Sigmoid colon (tissue), 7 donors: ENCODE measurements at regions of chr4 and their contacts with region 1.

Region 1: GRCh38 chr4:174522183-174523048 is at the start of gene HPGD:
- DNase-seq: peak; percentile 82
- H3K4me3 ChIP-seq: peak within 1 kb of the TSS; percentile 59 to 86 (median 76)
- H3K27ac ChIP-seq: peak within 1 kb of the TSS; percentile 63 to 87 (median 82)
- H3K4me1 ChIP-seq: peaks cover 0 to 44% (median 28%) of the 10 kb centered on the region in 4 donors
- H3K27me3 ChIP-seq: no peaks in the 10 kb centered on the region
- CTCF ChIP-seq: no peak
- EP300 ChIP-seq: no peak
- POLR2A ChIP-seq: peak in 1 of 2 donors; percentile 19
- total RNA-seq, gene HPGD: 134 to 232 (median 165) TPM

Region 2: DNA sequence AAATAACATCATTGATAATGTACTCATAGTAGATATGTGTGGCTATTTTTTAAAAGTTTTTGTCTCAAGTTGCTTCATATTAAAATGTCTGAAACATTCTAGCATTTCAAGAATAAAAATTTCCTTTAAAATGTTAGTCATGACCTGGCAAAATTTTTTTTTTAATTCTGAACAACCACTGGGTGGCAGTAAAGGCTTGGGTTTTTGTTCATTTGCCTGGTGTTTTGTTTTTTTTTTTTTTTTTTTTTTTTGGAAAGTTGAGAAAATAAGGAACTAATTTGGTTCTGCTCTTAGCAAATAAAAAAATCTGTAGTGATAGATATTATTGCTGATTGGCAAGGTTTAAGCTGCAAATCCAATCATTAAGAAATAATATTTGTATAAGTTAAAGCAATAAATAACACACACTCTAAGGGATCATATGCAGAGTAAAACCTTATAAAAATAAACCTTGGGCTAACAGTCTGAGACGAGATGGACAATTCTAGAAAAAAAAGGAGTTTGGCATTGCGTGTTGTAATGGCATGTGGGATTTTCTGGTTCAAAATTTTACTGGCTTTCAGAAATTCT is 157.3 kb before region 1 on chr4:
- intact Hi-C with region 1: loop called (anchors 2 kb)
- DNase-seq: no peak
- H3K4me3 ChIP-seq: no peak overlapping the region
- H3K27ac ChIP-seq: no peak overlapping the region
- H3K4me1 ChIP-seq: peaks cover 0 to 10% (median 2%) of the 10 kb centered on the region in 4 donors
- H3K27me3 ChIP-seq: no peaks in the 10 kb centered on the region
- CTCF ChIP-seq: peak in 3 of 4 experiments; percentile 24 to 43 (median 40)
- EP300 ChIP-seq: no peak
- POLR2A ChIP-seq: no peak

Region 3: GRCh38 chr4:174437324-174437723 is 85.1 kb before region 1 on chr4:
- intact Hi-C with region 1: no loop called
- DNase-seq: no peak
- H3K4me3 ChIP-seq: no peak overlapping the region
- H3K27ac ChIP-seq: peak overlapping the region in 1 of 4 donors; percentile 10
- H3K4me1 ChIP-seq: peaks cover 0 to 10% (median 10%) of the 10 kb centered on the region in 4 donors
- H3K27me3 ChIP-seq: no peaks in the 10 kb centered on the region
- CTCF ChIP-seq: no peak
- EP300 ChIP-seq: no peak
- POLR2A ChIP-seq: no peak

Region 4: DNA sequence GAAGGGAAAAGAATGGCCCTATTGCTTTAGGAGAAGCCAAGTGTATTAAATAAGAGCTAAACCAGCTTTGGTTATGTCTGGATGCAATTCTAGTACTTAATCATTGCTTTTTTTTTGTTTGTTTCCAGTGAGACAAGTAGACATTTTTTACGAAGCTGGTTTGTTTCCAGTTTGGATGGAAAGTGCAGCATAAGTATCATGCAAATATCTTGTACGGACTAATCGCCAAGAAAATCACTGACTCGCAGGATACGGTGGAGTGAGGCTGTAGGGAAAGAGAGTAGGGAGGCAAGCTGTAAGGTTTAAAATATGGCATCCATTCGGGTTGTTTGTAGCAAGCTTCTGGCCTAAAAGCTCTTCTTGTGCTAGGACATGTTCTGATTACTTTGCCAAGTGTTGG is 64.9 kb before region 1 on chr4:
- intact Hi-C with region 1: loop called (anchors 1 kb)
- DNase-seq: peak; percentile 75
- H3K4me3 ChIP-seq: no peak overlapping the region
- H3K27ac ChIP-seq: peak overlapping the region; percentile 56 to 75 (median 64)
- H3K4me1 ChIP-seq: peaks cover 0 to 82% (median 43%) of the 10 kb centered on the region in 4 donors
- H3K27me3 ChIP-seq: no peaks in the 10 kb centered on the region
- CTCF ChIP-seq: no peak
- EP300 ChIP-seq: peak in 1 of 4 donors; percentile 41
- POLR2A ChIP-seq: no peak

Region 5: GRCh38 chr4:174595161-174595929 is 72.9 kb after region 1 on chr4:
- intact Hi-C with region 1: loop called (anchors 5 kb)
- DNase-seq: no peak
- H3K4me3 ChIP-seq: no peak overlapping the region
- H3K27ac ChIP-seq: no peak overlapping the region
- H3K4me1 ChIP-seq: peaks cover 0 to 15% (median 3%) of the 10 kb centered on the region in 4 donors
- H3K27me3 ChIP-seq: no peaks in the 10 kb centered on the region
- CTCF ChIP-seq: no peak
- EP300 ChIP-seq: no peak
- POLR2A ChIP-seq: no peak

Region 6: GRCh38 chr4:174631901-174632758 is 109.7 kb after region 1 on chr4:
- intact Hi-C with region 1: loop called (anchors 2 kb)
- DNase-seq: no peak
- H3K4me3 ChIP-seq: no peak overlapping the region
- H3K27ac ChIP-seq: no peak overlapping the region
- H3K4me1 ChIP-seq: peaks cover 0 to 35% (median 14%) of the 10 kb centered on the region in 4 donors
- H3K27me3 ChIP-seq: no peaks in the 10 kb centered on the region
- CTCF ChIP-seq: peak; percentile 57 to 76 (median 66)
- EP300 ChIP-seq: no peak
- POLR2A ChIP-seq: no peak

Region 7: GRCh38 chr4:174686826-174687225 is 164.4 kb after region 1 on chr4:
- intact Hi-C with region 1: no loop called
- DNase-seq: no peak
- H3K4me3 ChIP-seq: no peak overlapping the region
- H3K27ac ChIP-seq: no peak overlapping the region
- H3K4me1 ChIP-seq: no peaks in the 10 kb centered on the region
- H3K27me3 ChIP-seq: no peaks in the 10 kb centered on the region
- CTCF ChIP-seq: no peak
- EP300 ChIP-seq: no peak
- POLR2A ChIP-seq: no peak

Region 8: GRCh38 chr4:174739576-174739975 is 217.2 kb after region 1 on chr4:
- intact Hi-C with region 1: no loop called
- DNase-seq: no peak
- H3K4me3 ChIP-seq: no peak overlapping the region
- H3K27ac ChIP-seq: no peak overlapping the region
- H3K4me1 ChIP-seq: no peaks in the 10 kb centered on the region
- H3K27me3 ChIP-seq: no peaks in the 10 kb centered on the region
- CTCF ChIP-seq: no peak
- EP300 ChIP-seq: no peak
- POLR2A ChIP-seq: no peak

Region 9: GRCh38 chr4:174928174-174928573 is 405.8 kb after region 1 on chr4:
- intact Hi-C with region 1: no loop called
- DNase-seq: no peak
- H3K4me3 ChIP-seq: no peak overlapping the region
- H3K27ac ChIP-seq: no peak overlapping the region
- H3K4me1 ChIP-seq: no peaks in the 10 kb centered on the region
- H3K27me3 ChIP-seq: no peaks in the 10 kb centered on the region
- CTCF ChIP-seq: no peak
- EP300 ChIP-seq: no peak
- POLR2A ChIP-seq: no peak